Natural killer cell (primary cell): ENCODE measurements at regions of chr3 and their contacts with region 1.

Region 1: DNA sequence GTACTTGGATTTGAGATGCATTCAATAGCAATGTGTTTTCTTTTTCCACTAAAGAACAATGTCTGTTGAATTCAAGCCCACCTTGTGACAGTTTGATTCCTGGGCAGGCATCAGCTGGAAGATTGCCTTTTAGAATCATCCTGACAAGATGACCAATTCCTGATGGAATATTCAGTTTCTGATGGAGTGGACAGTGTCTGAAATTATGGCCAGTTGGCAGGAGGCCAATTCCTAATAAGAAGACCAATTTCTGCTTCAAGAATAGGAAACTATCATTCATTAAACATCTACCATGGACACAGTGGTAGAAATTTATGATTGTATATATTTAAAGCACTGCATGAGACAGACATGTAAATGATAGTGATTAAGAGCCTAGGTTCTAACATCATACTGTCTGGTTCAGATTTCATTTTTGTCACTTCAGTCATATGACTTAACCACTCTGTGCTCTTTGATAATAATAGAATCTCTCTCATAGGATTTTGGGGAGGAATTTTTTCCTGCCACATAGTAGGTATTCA is 133.6 kb downstream of the CLSTN2 start:
- DNase-seq: no peak
- ATAC-seq: no peak
- H3K4me3 ChIP-seq: no peak overlapping the region
- H3K4me3 Mint-ChIP-seq: no peak overlapping the region
- H3K27ac ChIP-seq: no peak overlapping the region
- H3K27ac Mint-ChIP-seq: no peak overlapping the region
- H3K4me1 ChIP-seq: no peaks in the 10 kb centered on the region
- H3K4me1 Mint-ChIP-seq: no peaks in the 10 kb centered on the region
- H3K27me3 ChIP-seq: no peaks in the 10 kb centered on the region
- H3K27me3 Mint-ChIP-seq: no peaks in the 10 kb centered on the region
- CTCF ChIP-seq: no peak

Region 2: DNA sequence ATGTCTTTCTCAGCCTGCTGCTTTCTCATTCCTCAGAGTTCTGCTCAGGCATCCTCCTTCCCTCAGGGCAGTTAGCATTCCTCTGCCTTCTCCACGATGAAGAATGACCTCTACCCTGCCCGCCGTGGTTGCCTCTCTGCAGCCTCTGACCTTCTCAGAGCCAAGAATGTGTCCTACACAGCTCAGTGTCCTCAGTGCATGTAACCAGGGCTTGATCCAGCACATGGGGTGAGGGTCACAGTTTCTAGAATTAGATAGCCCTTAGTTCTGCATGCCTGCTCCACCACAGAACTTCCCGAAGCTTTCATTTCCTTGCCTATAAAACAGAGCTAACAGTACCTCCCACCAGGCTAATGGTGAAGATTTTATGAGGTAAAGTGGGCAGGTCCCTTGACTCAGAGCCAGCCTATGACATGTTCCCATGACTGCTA is 48.6 kb after region 1 on chr3:
- intact Hi-C with region 1: loop called (anchors 5 kb)
- DNase-seq: no peak
- ATAC-seq: no peak
- H3K4me3 ChIP-seq: no peak overlapping the region
- H3K4me3 Mint-ChIP-seq: no peak overlapping the region
- H3K27ac ChIP-seq: no peak overlapping the region
- H3K27ac Mint-ChIP-seq: no peak overlapping the region
- H3K4me1 ChIP-seq: no peaks in the 10 kb centered on the region
- H3K4me1 Mint-ChIP-seq: no peaks in the 10 kb centered on the region
- H3K27me3 ChIP-seq: no peaks in the 10 kb centered on the region
- H3K27me3 Mint-ChIP-seq: no peaks in the 10 kb centered on the region
- CTCF ChIP-seq: no peak